H1 (cell line): ENCODE measurements at regions of chr5 and their contacts with region 1.

Region 1: GRCh38 chr5:129094087-129094923 is at the start of gene ISOC1:
- DNase-seq: peak; percentile 79 to 91
- H3K4me3 ChIP-seq: peak within 1 kb of the TSS; percentile 79 to 93 (median 85)
- H3K27ac ChIP-seq: peak within 1 kb of the TSS; percentile 39
- H3K4me1 ChIP-seq: peaks cover 0 to 6% (median 1%) of the 10 kb centered on the region in 4 experiments; a peak in 2 of 7 replicates
- H3K27me3 ChIP-seq: peaks cover 0 to 3% (median 2%) of the 10 kb centered on the region in 4 experiments; a peak in 3 of 7 replicates
- CTCF ChIP-seq: peak in 2 of 3 experiments; percentile 6 to 24; a peak in 2 of 4 replicates
- EP300 ChIP-seq: no peak
- POLR2A ChIP-seq: peak; percentile 61 to 85
- RAD21 ChIP-seq: peak; percentile 29 to 32; a peak in 3 of 4 replicates
- total RNA-seq, gene ISOC1: 27.7 and 30.3 TPM in 2 replicates

Region 2: GRCh38 chr5:129113871-129114270 is 19.6 kb after region 1 on chr5:
- CTCF ChIA-PET with region 1: interaction called, 40 read pairs
- POLR2A ChIA-PET with region 1: interaction called, 3 read pairs
- DNase-seq: no peak
- H3K4me3 ChIP-seq: no peak overlapping the region
- H3K27ac ChIP-seq: no peak overlapping the region
- H3K4me1 ChIP-seq: peaks cover 0 to 9% (median 5%) of the 10 kb centered on the region in 4 experiments; a peak in 4 of 7 replicates
- H3K27me3 ChIP-seq: no peaks in the 10 kb centered on the region
- CTCF ChIP-seq: no peak
- EP300 ChIP-seq: no peak
- POLR2A ChIP-seq: no peak
- RAD21 ChIP-seq: no peak

Region 3: DNA sequence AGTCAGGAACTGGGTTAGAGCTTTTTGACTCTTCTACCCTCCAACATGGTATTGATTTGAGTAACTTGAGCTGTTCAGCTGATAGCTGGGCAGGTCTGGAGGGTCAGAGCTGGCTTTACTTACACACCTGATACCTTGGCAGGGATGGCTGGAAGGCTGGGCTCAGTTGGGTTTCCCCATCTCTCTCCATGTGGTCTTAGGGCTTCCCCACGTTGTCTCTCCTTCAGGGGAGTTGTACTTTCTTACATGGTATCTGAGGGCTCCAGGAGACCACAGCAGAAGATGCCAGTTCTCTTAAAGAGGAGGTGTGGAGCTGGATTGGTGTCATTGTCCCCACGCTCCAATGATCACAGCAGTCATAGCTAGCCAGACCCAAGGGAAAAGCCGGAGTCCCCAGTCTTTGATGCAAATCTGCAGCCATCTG is 25.9 kb after region 1 on chr5:
- CTCF ChIA-PET with region 1: interaction called, 62 read pairs
- POLR2A ChIA-PET with region 1: interaction called, 4 read pairs
- DNase-seq: no peak
- H3K4me3 ChIP-seq: no peak overlapping the region
- H3K27ac ChIP-seq: no peak overlapping the region
- H3K4me1 ChIP-seq: peaks cover 0 to 6% (median 5%) of the 10 kb centered on the region in 4 experiments; a peak in 3 of 7 replicates
- H3K27me3 ChIP-seq: no peaks in the 10 kb centered on the region
- CTCF ChIP-seq: no peak
- EP300 ChIP-seq: no peak
- POLR2A ChIP-seq: no peak
- RAD21 ChIP-seq: no peak

Region 4: DNA sequence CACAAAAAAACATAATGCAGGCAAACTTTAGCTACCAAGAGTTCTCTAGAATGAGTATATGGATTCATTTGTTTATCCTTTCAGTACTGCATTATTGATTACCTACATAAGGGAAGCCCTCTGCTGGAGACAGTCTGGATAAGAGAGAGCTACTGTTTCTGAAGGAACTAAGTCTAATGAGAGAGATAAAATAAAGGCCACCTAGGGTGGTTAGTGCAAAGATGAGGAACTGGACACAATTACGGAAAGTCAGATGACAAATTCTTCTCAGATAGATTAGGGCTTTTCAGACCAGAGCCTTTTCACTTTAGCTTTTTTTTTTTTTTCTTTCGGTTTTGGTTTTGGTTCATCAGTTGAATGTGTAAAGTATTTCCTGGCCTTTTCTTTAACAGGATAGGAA is 31.5 kb after region 1 on chr5:
- CTCF ChIA-PET with region 1: interaction called, 62 read pairs
- POLR2A ChIA-PET with region 1: interaction called, 5 read pairs
- DNase-seq: no peak
- H3K4me3 ChIP-seq: no peak overlapping the region
- H3K27ac ChIP-seq: no peak overlapping the region
- H3K4me1 ChIP-seq: no peaks in the 10 kb centered on the region
- H3K27me3 ChIP-seq: no peaks in the 10 kb centered on the region
- CTCF ChIP-seq: no peak
- EP300 ChIP-seq: no peak
- POLR2A ChIP-seq: no peak
- RAD21 ChIP-seq: no peak

Region 5: DNA sequence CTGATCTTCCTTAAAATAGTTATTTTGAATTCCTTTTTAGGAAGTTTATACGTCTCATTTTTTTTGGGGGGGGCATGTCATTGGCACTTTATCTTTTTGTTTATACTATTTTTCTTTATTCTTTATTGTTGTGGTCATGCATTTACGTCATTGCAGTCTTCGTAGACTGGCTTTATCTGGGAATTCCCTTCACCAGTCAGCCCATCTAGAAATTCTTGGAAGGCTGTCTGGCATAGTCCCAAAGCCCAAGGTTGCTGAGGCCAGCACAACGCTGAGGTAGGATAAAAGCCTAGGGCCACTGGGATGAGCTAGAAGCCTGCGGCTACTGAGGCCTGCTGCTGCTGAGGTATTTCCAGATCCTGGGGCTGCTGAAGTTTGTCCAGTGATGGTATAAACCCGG is 121.7 kb after region 1 on chr5:
- CTCF ChIA-PET with region 1: no interaction called
- POLR2A ChIA-PET with region 1: no interaction called
- DNase-seq: no peak
- H3K4me3 ChIP-seq: no peak overlapping the region
- H3K27ac ChIP-seq: no peak overlapping the region
- H3K4me1 ChIP-seq: no peaks in the 10 kb centered on the region
- H3K27me3 ChIP-seq: no peaks in the 10 kb centered on the region
- CTCF ChIP-seq: no peak
- EP300 ChIP-seq: no peak
- POLR2A ChIP-seq: no peak
- RAD21 ChIP-seq: no peak

Region 6: GRCh38 chr5:129345213-129345924 is 251.1 kb after region 1 on chr5:
- CTCF ChIA-PET with region 1: no interaction called
- POLR2A ChIA-PET with region 1: no interaction called
- DNase-seq: no peak
- H3K4me3 ChIP-seq: no peak overlapping the region
- H3K27ac ChIP-seq: no peak overlapping the region
- H3K4me1 ChIP-seq: no peaks in the 10 kb centered on the region
- H3K27me3 ChIP-seq: peaks cover 0 to 1% (median 0%) of the 10 kb centered on the region in 4 experiments; a peak in 1 of 7 replicates
- CTCF ChIP-seq: no peak
- EP300 ChIP-seq: no peak
- POLR2A ChIP-seq: no peak
- RAD21 ChIP-seq: no peak

Region 7: GRCh38 chr5:129377504-129377903 is 283.2 kb after region 1 on chr5:
- CTCF ChIA-PET with region 1: no interaction called
- POLR2A ChIA-PET with region 1: no interaction called
- DNase-seq: no peak
- H3K4me3 ChIP-seq: no peak overlapping the region
- H3K27ac ChIP-seq: no peak overlapping the region
- H3K4me1 ChIP-seq: no peaks in the 10 kb centered on the region; a peak in 1 of 7 replicates
- H3K27me3 ChIP-seq: no peaks in the 10 kb centered on the region
- CTCF ChIP-seq: no peak
- EP300 ChIP-seq: no peak
- POLR2A ChIP-seq: no peak
- RAD21 ChIP-seq: no peak